Activated T-helper 2 cell treated with anti-CD3 and anti-CD28 coated beads, Interferon-gamma antibody, Interleukin-2, Interleukin-4, amounts not matched to agents 10 μg/mL and 5 μg/mL and 100 μg/mL, durations not matched to agents 14 hours and 24 hours and 36 hours (primary cell): ENCODE measurements at regions of chr4 and their contacts with region 1.

Region 1: DNA sequence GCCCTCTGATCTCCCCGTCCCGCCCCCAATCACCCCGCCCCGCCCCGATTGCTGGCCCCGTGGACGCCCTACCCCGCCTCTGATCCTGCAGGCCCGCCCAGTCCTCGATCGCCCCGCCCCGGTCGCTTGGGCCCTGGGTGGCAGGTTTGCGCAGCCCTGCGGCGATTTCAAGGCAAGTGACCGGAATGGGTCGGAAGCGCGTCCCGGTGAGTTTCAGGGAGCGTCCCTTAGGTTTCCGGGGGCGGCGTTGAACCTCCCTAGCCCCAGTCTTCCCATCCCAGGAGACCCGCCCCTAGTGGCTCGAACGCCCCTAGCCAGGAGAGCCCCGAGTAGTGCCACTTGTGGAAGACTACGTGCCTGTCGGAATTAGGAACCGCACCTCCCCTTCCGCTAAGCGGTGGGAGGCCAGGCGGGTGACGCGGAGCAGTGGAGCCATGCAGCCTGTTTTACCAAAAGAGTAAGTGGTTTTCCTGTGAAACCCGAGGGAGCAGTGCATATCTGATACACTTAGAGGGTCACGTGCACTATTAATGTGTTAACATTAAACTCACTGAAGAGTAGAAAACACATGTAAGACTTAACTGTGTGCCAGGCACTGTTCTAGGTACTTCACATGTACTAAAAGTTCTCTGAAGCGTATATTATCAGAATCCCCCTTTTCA is 354 bp upstream of the TEC start:
- DNase-seq: peak; percentile 79
- H3K4me3 Mint-ChIP-seq: peak overlapping the region; percentile 93
- H3K27ac Mint-ChIP-seq: peak overlapping the region; percentile 87
- H3K4me1 Mint-ChIP-seq: peaks cover 19% of the 10 kb centered on the region
- H3K27me3 Mint-ChIP-seq: no peaks in the 10 kb centered on the region

Region 2: GRCh38 chr4:47914220-47914925 is 355.6 kb before region 1 on chr4 and contains the start of gene NFXL1:
- intact Hi-C with region 1: loop called (anchors 2 kb)
- DNase-seq: peak; percentile 93
- H3K4me3 Mint-ChIP-seq: peak within 1 kb of the TSS; percentile 90
- H3K27ac Mint-ChIP-seq: peak within 1 kb of the TSS; percentile 83
- H3K4me1 Mint-ChIP-seq: peaks cover 22% of the 10 kb centered on the region
- H3K27me3 Mint-ChIP-seq: no peaks in the 10 kb centered on the region
- total RNA-seq, gene NFXL1: 11.9 and 13.3 TPM in 2 replicates

Region 3: DNA sequence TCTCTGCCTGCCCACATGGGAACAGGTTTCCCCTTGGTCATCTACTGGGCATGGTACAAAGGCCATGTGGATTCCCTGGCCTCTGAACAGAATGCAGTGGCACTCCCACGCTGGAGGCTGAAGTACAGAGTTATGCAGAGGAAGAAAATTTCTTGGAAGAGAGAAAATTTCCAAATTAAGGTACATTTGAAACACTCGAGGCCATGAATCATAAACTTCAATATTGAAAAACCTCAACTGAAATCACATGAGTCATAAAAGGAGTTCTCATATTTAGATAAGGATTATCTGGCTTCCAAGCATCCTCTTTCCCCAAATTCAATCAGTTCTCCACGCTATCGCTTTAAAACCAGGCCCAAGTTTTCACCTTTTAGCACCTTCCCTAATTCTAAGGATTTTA is 107.8 kb before region 1 on chr4:
- intact Hi-C with region 1: loop called (anchors 5 kb)
- DNase-seq: no peak
- H3K4me3 Mint-ChIP-seq: no peak overlapping the region
- H3K27ac Mint-ChIP-seq: no peak overlapping the region
- H3K4me1 Mint-ChIP-seq: peaks cover 14% of the 10 kb centered on the region
- H3K27me3 Mint-ChIP-seq: peaks cover 12% of the 10 kb centered on the region

Region 4: DNA sequence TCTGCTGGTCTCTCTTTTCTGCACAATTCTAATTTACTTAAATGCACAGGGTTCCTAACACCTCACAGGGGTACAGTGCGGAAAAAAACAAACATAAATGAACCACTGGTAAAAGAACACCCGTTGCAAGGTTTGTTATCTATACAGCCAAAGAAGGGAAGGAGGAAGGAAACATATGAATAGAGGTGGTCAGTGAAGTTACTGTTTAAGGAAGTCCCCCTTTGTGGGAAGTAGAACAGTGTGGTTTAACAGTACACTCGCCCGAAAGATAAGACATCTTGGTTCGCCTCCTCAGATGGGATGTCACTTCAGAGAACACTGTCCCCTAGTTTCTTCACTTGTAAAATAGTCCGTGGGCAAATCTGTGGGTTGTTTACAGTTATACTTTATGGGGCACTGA is 57.8 kb before region 1 on chr4:
- intact Hi-C with region 1: loop called (anchors 5 kb)
- DNase-seq: no peak
- H3K4me3 Mint-ChIP-seq: no peak overlapping the region
- H3K27ac Mint-ChIP-seq: no peak overlapping the region
- H3K4me1 Mint-ChIP-seq: peaks cover 22% of the 10 kb centered on the region
- H3K27me3 Mint-ChIP-seq: no peaks in the 10 kb centered on the region

Region 5: DNA sequence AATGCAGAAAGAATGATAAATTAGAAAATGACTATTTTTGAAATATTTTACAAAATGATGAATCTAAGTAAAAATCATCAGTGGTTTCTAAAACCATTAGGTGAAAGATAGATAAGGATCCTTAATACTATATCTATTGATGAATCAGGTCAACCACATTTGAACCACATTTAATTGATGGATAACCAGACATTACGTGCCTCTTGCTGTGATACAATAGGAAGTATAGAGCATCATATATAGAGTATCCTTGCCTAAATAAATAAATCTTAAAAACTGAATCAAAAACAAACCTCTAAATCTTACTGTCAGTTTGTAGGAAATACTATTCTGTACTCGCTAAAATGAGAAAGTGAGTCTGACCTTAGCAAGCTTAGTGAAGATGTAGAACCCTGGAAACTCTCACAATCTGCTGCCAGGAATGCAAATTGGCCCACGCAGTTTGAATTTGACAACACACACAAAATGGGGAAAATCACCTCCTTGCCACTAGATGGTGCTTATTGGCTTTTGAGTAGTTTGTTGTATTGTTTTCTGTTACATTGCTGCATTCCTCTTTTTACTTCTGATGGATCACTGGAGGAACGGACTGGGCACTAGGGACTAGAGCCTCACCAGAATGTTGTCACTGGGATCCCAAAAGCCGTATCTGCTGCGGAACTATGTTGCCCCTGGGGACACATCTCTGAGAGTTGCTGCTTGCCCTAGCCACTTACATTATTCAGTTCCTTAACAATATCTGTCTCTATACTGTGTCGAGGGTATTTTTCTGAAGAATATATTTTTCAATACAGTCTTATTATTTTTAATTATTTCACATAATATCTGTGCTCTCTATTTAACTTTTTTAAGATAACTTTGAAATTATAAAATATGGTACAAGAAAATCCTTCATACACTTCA is 46.0 kb after region 1 on chr4:
- intact Hi-C with region 1: loop called (anchors 2 kb)
- DNase-seq: no peak
- H3K4me3 Mint-ChIP-seq: no peak overlapping the region
- H3K27ac Mint-ChIP-seq: no peak overlapping the region
- H3K4me1 Mint-ChIP-seq: peaks cover 4% of the 10 kb centered on the region
- H3K27me3 Mint-ChIP-seq: peaks cover 2% of the 10 kb centered on the region

Region 6: GRCh38 chr4:48350871-48351270 is 80.9 kb after region 1 on chr4:
- intact Hi-C with region 1: no loop called
- DNase-seq: no peak
- H3K4me3 Mint-ChIP-seq: no peak overlapping the region
- H3K27ac Mint-ChIP-seq: no peak overlapping the region
- H3K4me1 Mint-ChIP-seq: peaks cover 43% of the 10 kb centered on the region
- H3K27me3 Mint-ChIP-seq: no peaks in the 10 kb centered on the region